Uterus (tissue), 4 donors: ENCODE measurements at regions of chr19 and their contacts with region 1.

Region 1: DNA sequence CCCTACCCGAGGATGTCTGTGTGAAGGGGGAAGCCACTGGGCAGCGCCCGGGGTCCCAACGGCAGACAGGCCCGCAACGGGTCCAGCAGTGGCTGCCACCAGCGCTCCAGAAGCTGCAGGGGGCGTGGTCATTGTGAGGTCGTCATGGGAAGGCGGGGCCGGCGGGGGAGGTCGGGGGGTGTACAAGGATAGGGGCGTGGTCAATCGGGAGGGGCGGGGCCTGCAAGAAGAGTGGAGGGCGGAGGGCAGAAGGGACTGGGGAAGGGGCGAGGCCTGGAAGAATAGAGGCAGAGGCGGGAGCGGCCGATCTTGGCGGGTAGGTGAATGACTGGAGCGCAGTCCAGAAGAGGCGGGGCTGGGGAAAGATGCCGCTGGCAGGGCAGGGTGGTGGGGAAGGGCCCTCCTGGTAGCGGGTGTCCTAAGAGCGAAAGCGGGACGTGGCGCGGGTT is 4.4 kb downstream of the FUZ start:
- DNase-seq: peak; percentile 93 to 97
- H3K4me3 ChIP-seq: peak overlapping the region; percentile 67 to 88
- H3K27ac ChIP-seq: peak overlapping the region; percentile 86 to 89
- H3K4me1 ChIP-seq: peaks cover 0 to 4% of the 10 kb centered on the region in 2 donors
- H3K27me3 ChIP-seq: no peaks in the 10 kb centered on the region
- CTCF ChIP-seq: no peak
- POLR2A ChIP-seq: peak; percentile 58 to 67

Region 2: DNA sequence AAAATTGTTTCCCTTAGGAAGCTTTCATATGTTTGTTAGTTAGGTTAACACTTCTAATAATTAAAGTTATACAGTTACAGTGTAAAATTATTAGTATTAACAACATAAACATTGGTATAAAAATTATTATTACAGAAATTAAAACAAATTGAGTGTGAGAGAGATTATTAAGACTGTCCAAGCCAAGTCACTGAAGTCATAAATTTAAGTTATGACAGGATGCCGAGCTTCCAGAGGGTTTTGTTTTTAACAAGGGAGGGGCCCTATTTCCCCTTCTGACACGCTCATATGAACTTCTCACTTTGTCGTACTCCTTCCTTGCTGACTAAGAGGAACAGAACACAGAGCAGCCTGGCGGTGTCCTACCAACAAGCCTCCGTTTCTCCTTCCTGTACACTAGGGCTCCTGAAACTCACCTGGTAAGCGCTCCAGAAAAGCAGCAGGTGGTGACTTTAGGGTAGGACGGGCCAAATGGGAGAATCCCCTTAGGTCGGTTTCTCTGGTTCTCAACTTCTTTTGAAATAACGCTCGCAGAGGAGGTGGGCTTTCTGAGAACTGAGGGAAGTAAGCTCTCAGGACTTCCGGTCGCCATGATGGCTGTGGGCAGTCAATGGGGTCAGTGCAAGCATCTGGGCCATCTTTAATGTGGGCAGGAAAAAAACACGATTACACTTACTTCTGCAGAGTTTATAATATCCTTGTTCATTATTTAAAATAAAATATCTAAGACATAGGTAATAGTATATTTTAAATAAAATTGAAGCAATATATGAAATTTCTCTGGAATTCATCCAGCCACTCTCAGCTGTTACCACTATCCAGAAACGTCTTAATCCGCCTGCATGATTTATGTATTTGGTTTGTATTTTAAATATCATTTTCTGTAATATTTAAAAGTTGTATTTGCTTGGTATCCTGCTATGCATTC is 1553.1 kb before region 1 on chr19 and contains the start of gene CARD8:
- intact Hi-C with region 1: no loop called
- DNase-seq: peak; percentile 74 to 85
- H3K4me3 ChIP-seq: peak within 1 kb of the TSS; percentile 61 to 62
- H3K27ac ChIP-seq: peak within 1 kb of the TSS; percentile 92 to 93
- H3K4me1 ChIP-seq: peaks cover 0 to 4% of the 10 kb centered on the region in 2 donors
- H3K27me3 ChIP-seq: no peaks in the 10 kb centered on the region
- CTCF ChIP-seq: peak in 2 of 4 experiments; percentile 9 to 30
- POLR2A ChIP-seq: peak in 1 of 2 donors; percentile 13
- total RNA-seq, gene CARD8: 18.8 to 80.2 (median 53.0) TPM

Region 3: GRCh38 chr19:49701271-49701786 is 107.4 kb before region 1 on chr19:
- intact Hi-C with region 1: no loop called
- DNase-seq: no peak
- H3K4me3 ChIP-seq: no peak overlapping the region
- H3K27ac ChIP-seq: no peak overlapping the region
- H3K4me1 ChIP-seq: no peaks in the 10 kb centered on the region
- H3K27me3 ChIP-seq: no peaks in the 10 kb centered on the region
- CTCF ChIP-seq: no peak
- POLR2A ChIP-seq: no peak

Region 4: DNA sequence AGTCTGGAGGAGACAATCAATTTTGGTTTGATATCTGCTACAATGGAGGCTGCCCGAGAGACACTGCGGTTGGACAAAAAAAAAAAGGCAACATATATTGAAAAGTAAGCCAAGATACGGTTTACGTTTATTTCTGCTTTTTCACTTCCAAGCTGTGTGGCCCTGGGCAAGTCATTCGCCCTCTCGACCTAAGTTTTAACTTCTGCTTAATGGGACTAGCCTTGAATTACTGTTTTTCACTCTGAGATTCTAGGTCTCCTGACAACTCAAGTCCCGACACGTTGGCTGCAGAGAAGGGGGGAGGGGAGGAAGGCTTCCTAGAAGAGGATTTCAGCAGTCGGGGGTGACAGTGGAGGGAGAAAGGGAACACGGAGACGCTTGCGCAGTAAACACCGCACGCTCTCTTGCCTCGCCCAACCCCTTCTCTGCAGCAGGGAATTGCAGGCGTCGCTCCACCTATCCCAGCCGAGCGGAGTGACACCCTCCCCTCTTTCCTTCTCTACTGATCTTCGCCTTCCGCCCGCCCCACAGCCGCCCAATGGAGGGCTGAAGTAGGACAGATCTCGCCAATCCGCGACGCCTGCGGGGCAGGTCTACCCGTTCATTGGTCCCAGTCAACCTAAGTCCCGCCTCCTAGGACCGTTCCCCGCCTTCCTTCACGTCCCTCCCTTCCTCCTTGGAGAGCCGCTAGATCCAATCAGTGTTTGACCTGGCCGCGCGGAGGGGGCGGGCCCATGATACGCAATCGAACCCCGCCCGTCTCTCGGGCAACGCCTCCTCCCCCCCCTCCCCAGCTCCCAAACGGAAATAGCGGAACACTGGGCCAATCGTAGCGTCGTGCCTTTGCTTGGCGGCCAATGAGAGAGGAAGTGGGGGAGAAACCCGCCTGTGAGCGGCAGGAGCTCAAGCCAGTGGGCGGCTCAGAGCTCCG is 42.5 kb before region 1 on chr19:
- intact Hi-C with region 1: loop called (anchors 5 kb)
- DNase-seq: peak; percentile 99 to 100
- H3K4me3 ChIP-seq: peak overlapping the region; percentile 93 to 96
- H3K27ac ChIP-seq: peak overlapping the region; percentile 90 to 93
- H3K4me1 ChIP-seq: peaks cover 0 to 17% of the 10 kb centered on the region in 2 donors
- H3K27me3 ChIP-seq: no peaks in the 10 kb centered on the region
- CTCF ChIP-seq: peak in 1 of 4 experiments; percentile 30
- POLR2A ChIP-seq: peak; percentile 86 to 94